ENCODE measurements at regions of chr2 and their contacts with region 1.

Region 1: GRCh38 chr2:127508631-127509034 is 17.7 kb downstream of the IWS1 start:
- DNase-seq: peak; percentile 57 to 94
- H3K4me3 ChIP-seq: no peak overlapping the region
- H3K27ac ChIP-seq: peak overlapping the region; percentile 59 to 78
- H3K4me1 ChIP-seq: peaks cover 0 to 16% of the 10 kb centered on the region in 2 donors
- H3K27me3 ChIP-seq: no peaks in the 10 kb centered on the region
- CTCF ChIP-seq: no peak

Region 2: DNA sequence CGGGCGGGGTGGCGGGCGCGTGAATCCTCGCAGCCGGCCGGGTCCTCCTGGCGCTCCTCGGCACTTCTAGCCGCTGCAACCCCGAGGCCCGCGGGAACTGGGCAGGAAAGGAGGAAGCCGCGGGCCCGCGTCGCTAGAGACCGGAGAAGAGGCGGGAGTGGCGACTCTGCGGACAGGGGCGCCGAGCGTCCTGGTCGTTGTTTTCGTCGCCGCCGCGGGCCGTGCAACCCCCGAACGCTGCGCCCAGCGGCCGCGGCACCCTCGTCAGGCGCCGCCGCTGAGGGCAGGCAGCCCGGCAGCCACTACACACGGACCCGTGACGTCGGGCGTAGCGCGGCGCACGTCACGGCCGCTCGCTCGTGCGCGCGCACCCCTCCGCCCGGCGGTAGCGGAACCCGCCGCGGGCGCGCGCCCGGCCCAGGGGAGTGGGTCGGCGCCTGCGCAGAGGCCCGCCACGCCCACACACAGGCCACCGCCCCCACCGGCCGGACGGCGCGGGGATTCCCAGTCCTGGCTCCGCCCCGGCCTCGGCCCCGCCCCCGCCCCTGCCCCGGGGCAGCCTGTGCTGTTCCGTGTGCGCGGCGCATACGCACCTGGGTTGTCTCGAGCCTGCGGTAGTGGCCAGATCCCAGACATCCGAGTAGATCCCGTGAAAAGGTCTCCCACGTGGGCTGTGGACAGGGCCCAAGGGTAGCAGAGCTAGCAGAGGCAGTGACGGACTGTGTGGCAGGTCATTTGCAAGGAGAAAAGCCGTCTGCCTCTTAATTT is 120.8 kb before region 1 on chr2 and contains the start of gene MAP3K2:
- intact Hi-C with region 1: loop called (anchors 5 kb)
- DNase-seq: peak; percentile 77 to 96
- H3K4me3 ChIP-seq: peak within 1 kb of the TSS; percentile 90 to 99
- H3K27ac ChIP-seq: peak within 1 kb of the TSS; percentile 98 to 100
- H3K4me1 ChIP-seq: peaks cover 8 to 15% of the 10 kb centered on the region in 2 donors
- H3K27me3 ChIP-seq: no peaks in the 10 kb centered on the region
- CTCF ChIP-seq: no peak
- total RNA-seq, gene MAP3K2: 47.7 TPM

Region 3: GRCh38 chr2:127566576-127566975 is 57.9 kb after region 1 on chr2:
- intact Hi-C with region 1: loop called (anchors 2 kb)
- DNase-seq: peak in 1 of 2 donors; percentile 50
- H3K4me3 ChIP-seq: no peak overlapping the region
- H3K27ac ChIP-seq: no peak overlapping the region
- H3K4me1 ChIP-seq: peaks cover 14 to 34% of the 10 kb centered on the region in 2 donors
- H3K27me3 ChIP-seq: no peaks in the 10 kb centered on the region
- CTCF ChIP-seq: no peak

Region 4: GRCh38 chr2:127649684-127650040 is 141.0 kb after region 1 on chr2:
- intact Hi-C with region 1: loop called (anchors 5 kb)
- DNase-seq: peak in 1 of 2 donors; percentile 91
- H3K4me3 ChIP-seq: peak overlapping the region in 1 of 2 donors; percentile 5
- H3K27ac ChIP-seq: peak overlapping the region; percentile 40 to 58
- H3K4me1 ChIP-seq: peaks cover 18 to 51% of the 10 kb centered on the region in 2 donors
- H3K27me3 ChIP-seq: no peaks in the 10 kb centered on the region
- CTCF ChIP-seq: peak; percentile 68 to 80 (median 80)

Region 5: DNA sequence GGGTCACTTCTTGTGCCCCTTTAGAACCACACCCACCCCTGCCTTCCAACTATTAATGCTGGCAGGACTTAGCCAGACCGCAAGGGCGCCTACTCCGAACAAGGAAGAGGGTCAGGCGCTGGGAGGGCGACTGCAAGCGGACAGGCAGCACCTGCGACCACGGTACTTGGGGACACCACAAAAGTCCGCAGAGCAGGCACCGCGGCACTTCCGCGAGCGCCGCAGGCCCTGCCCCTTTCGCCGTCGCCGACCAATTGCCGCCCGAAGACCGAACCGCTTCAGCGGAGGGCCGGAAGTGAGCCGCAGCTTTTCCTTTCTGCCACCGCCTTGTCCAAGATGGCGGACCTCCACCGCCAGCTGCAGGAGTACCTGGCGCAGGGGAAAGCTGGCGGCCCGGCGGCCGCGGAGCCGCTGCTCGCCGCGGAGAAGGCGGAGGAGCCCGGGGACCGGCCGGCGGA is 192.6 kb after region 1 on chr2 and contains the start of gene SFT2D3:
- intact Hi-C with region 1: loop called (anchors 2 kb)
- DNase-seq: peak; percentile 52 to 95
- H3K4me3 ChIP-seq: peak within 1 kb of the TSS; percentile 81 to 86
- H3K27ac ChIP-seq: peak within 1 kb of the TSS; percentile 90 to 93
- H3K4me1 ChIP-seq: peaks cover 0 to 22% of the 10 kb centered on the region in 2 donors
- H3K27me3 ChIP-seq: no peaks in the 10 kb centered on the region
- CTCF ChIP-seq: no peak
- total RNA-seq, gene SFT2D3: 8.3 TPM

Region 6: DNA sequence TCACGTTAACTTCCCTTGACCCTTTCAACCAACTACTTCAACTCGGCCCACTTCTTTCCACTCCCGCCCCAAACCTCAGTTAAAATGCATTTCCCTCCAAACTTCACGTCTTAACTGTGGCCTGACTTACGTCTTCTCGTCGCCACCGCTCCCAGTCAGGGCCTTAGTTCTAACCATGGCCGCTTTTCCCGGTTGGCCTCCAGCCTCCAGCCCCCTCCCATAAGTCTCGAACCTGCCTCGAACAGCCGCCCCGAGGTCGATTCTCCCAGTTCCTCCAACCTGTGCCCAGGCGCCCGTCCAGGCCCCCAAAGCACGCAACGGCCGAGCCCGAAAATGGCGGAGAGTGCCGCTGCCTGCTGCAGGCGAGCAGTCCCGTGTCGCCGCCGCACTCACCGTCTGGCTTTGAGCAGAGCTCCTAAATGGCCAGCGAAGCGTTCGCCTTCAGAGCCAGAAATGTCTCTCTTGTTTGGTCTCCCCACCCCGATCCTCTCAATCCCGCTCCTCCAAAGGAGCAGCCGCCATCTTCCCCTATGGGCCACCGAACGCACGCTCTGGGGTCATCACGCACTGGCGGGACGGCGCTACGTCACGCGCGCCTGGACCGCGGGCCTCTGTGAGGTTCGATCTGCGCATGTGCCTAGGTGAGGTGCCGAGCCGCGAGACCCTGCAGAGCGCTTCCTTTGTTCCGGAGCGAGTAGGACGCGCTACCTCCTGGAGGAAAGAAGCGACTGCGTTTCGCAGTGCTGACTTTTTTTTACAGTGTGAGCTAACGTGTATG is 302.2 kb after region 1 on chr2 and contains the start of gene WDR33:
- intact Hi-C with region 1: loop called (anchors 5 kb)
- DNase-seq: peak; percentile 57 to 90
- H3K4me3 ChIP-seq: peak within 1 kb of the TSS; percentile 67 to 70
- H3K27ac ChIP-seq: peak within 1 kb of the TSS; percentile 79 to 87
- H3K4me1 ChIP-seq: peaks cover 0 to 26% of the 10 kb centered on the region in 2 donors
- H3K27me3 ChIP-seq: no peaks in the 10 kb centered on the region
- CTCF ChIP-seq: no peak
- total RNA-seq, gene WDR33: 13.9 TPM

Region 7: DNA sequence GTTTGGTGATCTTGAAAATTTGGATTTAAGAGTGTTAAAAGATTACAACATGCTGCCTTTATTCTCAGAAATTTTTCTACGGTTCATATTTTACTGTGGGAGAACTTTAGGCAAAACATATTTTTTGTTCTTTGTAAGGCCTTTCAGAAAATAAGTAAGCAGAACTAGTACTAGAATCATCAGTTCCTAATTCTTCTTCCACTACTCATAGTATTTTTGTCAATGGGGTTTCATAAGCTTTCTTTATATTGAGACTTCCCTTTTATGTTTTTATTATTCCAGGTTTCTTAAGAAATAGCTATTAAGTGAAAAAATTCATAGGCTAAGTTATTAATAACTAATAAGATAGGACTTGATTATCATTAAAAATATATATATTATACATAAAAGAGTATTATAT is 594.8 kb after region 1 on chr2:
- intact Hi-C with region 1: no loop called
- DNase-seq: no peak
- H3K4me3 ChIP-seq: no peak overlapping the region
- H3K27ac ChIP-seq: no peak overlapping the region
- H3K4me1 ChIP-seq: peaks cover 0 to 8% of the 10 kb centered on the region in 2 donors
- H3K27me3 ChIP-seq: no peaks in the 10 kb centered on the region
- CTCF ChIP-seq: no peak

Region 8: DNA sequence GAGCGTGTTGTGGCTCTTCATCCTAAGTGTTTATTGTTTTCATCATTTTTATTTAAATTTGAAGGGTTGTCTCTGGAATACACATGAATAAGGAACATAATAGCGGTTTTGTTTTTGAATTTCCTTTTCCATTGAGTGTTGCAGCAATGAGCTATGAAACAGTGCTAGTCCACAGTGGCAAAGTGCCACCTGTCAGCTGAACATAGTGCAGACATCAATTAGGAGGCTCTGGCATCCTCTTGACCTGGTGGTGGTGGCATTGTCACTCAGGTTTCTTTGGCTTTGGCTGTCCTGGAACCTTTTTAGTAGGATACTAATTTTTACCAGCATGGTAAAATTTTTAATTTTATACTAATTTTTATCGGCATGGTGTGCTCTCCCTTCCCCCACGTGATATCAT is 645.6 kb after region 1 on chr2:
- intact Hi-C with region 1: no loop called
- DNase-seq: no peak
- H3K4me3 ChIP-seq: no peak overlapping the region
- H3K27ac ChIP-seq: no peak overlapping the region
- H3K4me1 ChIP-seq: no peaks in the 10 kb centered on the region
- H3K27me3 ChIP-seq: no peaks in the 10 kb centered on the region
- CTCF ChIP-seq: no peak

Measured in ascending aorta (tissue), 2 donors.